ENCODE measurements at regions of chr5 and their contacts with region 1.

Region 1: DNA sequence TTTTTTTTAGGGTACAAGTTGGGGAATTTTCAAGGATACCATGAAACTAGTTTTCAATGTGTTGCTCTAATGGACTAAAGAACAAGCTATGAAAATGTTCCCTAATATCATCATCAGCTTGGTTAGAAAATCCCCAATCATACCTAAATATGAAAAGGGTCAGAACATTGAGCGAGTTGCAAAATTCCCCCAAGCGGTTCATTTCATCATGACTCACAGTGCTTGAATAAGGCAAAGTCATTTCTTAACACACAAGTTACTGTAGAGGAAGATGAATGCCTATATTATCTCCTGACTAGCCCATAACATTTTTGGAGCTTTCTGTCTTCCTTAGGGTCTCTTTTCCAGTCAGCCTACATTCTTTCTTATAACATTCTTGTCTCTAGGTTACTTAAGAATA is 62.7 kb downstream of the ST8SIA4 start:
- DNase-seq: no peak
- H3K4me3 Mint-ChIP-seq: no peak overlapping the region
- H3K27ac Mint-ChIP-seq: peak overlapping the region; percentile 88
- H3K4me1 Mint-ChIP-seq: peaks cover 74% of the 10 kb centered on the region
- H3K27me3 Mint-ChIP-seq: no peaks in the 10 kb centered on the region

Region 2: GRCh38 chr5:100852988-100853449 is 12.6 kb after region 1 on chr5:
- CTCF ChIA-PET with region 1: interaction called, 15 read pairs
- POLR2A ChIA-PET with region 1: interaction called, 28 read pairs
- DNase-seq: no peak
- H3K4me3 Mint-ChIP-seq: peak overlapping the region; percentile 62
- H3K27ac Mint-ChIP-seq: peak overlapping the region; percentile 94
- H3K4me1 Mint-ChIP-seq: peaks cover 50% of the 10 kb centered on the region
- H3K27me3 Mint-ChIP-seq: no peaks in the 10 kb centered on the region

Measured in activated CD4-positive, alpha-beta memory T cell treated with anti-CD3 and anti-CD28 coated beads, Interleukin-2, amount 10 ng/mL, durations not matched to agents 7 days and 5 days (primary cell).